Activated naive CD4-positive, alpha-beta T cell treated with anti-CD3 and anti-CD28 coated beads for 36 hours (primary cell): ENCODE measurements at regions of chr3 and their contacts with region 1.

Region 1: GRCh38 chr3:196502775-196503195 is 783 bp downstream of the RNF168 start:
- DNase-seq: peak; percentile 77
- H3K4me3 Mint-ChIP-seq: peak overlapping the region; percentile 88
- H3K27ac Mint-ChIP-seq: peak overlapping the region; percentile 93
- H3K4me1 Mint-ChIP-seq: peaks cover 33% of the 10 kb centered on the region
- H3K27me3 Mint-ChIP-seq: no peaks in the 10 kb centered on the region

Region 2: DNA sequence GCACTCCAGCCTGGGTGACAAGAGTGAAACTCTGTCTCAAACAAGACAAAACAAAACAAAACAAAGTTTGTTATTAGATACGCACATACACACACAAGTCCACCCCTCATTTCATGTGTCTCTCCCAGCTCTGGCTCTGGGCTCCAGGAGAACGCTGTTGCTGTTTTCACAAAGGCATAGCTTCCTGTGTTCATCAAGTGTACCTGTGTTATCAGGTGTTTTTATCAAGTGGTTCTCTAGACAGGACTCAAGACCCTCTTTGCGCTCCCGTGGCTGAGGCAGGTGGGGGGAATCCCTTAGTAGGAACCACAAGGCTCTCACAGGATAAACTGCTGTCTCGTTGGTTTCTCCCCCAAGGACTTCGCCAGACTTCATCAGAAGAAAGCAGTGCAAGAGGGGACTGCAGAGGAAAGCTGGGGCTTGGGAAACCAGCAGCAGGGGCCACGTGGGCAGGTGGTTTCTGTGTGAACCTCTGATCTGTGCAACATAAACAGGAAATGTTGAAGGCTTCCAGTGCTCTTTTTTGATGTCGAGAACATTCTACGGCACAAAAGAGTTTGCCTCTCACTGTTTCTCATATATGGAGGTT is 952.8 kb before region 1 on chr3:
- CTCF ChIA-PET with region 1: no interaction called
- intact Hi-C with region 1: loop called (anchors 5 kb)
- DNase-seq: peak; percentile 85
- H3K4me3 Mint-ChIP-seq: peak overlapping the region; percentile 63
- H3K27ac Mint-ChIP-seq: peak overlapping the region; percentile 87
- H3K4me1 Mint-ChIP-seq: peaks cover 83% of the 10 kb centered on the region
- H3K27me3 Mint-ChIP-seq: no peaks in the 10 kb centered on the region

Region 3: DNA sequence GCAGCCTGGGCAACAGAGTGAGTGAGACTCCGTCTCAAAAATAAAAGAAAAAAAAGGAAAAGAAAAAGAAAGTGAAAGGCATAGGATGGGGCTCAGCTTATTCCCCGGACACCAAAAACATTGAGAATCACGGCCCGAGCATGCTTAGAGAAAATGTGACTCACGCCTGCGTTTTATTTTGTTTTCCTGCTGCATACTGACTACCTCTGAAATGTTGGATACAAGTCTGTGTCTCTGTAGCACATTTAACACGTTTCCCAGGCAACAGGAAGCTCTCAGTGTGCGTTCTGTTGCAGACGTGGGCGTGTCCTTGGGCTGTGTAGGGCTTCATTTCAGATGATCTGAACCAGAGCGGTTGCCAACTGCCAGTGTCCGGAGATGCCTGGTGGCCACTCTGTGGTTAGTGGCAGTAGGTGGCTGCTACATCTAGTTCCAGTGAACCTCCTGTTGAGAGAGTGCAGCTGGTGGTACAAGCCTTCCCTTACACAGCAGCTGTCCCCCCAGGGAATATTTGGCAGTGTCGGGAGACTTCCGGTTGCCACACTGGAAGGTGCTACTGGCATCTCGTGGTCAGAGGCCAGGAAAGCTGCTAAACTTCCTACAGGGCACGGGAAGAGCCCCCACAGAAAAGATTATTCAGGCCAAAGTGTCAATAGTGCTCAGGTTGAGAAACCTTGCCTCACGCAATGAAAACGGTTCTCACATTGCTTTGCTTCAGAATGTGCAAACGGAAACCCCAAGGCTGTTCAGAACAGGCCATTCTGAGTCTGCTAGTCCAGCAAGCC is 283.4 kb before region 1 on chr3:
- CTCF ChIA-PET with region 1: no interaction called
- intact Hi-C with region 1: loop called (anchors 1 kb)
- DNase-seq: peak; percentile 89
- H3K4me3 Mint-ChIP-seq: peak overlapping the region; percentile 66
- H3K27ac Mint-ChIP-seq: peak overlapping the region; percentile 84
- H3K4me1 Mint-ChIP-seq: peaks cover 26% of the 10 kb centered on the region
- H3K27me3 Mint-ChIP-seq: no peaks in the 10 kb centered on the region

Region 4: GRCh38 chr3:196317687-196318467 is 184.9 kb before region 1 on chr3 and contains the start of gene DYNLT2B:
- CTCF ChIA-PET with region 1: no interaction called
- intact Hi-C with region 1: loop called (anchors 1 kb)
- DNase-seq: peak; percentile 88
- H3K4me3 Mint-ChIP-seq: peak within 1 kb of the TSS; percentile 94
- H3K27ac Mint-ChIP-seq: peak within 1 kb of the TSS; percentile 93
- H3K4me1 Mint-ChIP-seq: peaks cover 20% of the 10 kb centered on the region
- H3K27me3 Mint-ChIP-seq: no peaks in the 10 kb centered on the region
- total RNA-seq, gene DYNLT2B: 13.3 TPM

Region 5: GRCh38 chr3:196528639-196529233 is 26.0 kb after region 1 on chr3:
- CTCF ChIA-PET with region 1: interaction called, 37 read pairs
- intact Hi-C with region 1: loop called (anchors 1 kb)
- DNase-seq: peak; percentile 87
- H3K4me3 Mint-ChIP-seq: peak overlapping the region; percentile 74
- H3K27ac Mint-ChIP-seq: peak overlapping the region; percentile 36
- H3K4me1 Mint-ChIP-seq: peaks cover 6% of the 10 kb centered on the region
- H3K27me3 Mint-ChIP-seq: peaks cover 2% of the 10 kb centered on the region